ENCODE measurements at regions of chr7 and their contacts with region 1.

Region 1: DNA sequence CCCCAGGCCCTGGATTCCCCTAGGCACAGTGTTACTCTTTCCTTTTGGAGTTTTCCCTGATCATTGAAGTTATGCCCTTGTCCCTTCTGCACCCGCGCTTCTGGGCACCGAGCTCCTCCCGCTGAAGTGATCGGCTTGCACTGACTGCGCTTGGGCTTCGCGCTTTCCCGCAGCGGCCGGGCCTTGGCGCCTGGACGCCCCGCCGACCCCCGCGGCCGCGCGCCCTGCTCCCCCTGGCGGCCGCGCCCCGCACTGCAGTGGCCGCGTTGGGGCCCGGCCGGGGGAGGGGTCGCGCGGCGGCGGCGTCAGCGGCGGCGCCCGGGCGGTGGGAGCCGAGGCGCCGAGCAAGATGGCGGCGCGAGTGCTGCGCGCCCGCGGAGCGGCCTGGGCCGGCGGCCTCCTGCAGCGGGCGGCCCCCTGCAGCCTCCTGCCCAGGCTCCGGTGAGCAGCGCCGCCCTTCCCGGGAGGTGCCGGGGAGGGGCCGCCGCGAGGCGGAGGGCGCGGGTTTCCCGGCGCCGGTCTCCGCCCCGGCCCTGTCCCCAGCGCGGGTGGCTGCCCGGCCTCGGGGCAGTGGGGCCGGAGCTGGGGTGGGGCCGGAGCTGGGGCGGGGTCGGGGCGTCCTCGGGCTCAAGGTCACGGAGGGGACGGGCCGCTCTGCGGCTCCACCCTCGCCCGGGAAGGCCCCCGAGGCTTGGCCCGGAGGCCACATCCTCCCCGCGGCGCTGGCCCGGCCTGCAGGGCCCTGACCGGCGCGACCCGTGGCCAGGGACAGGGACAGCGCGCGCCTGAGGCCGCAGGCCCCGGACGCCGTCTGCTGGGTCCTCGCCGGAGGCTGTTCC is at the start of gene NIPSNAP2:
- DNase-seq: peak; percentile 72 to 84
- ATAC-seq: peak; percentile 89 to 93 (median 91)
- H3K4me3 ChIP-seq: peak within 1 kb of the TSS; percentile 57
- H3K4me3 Mint-ChIP-seq: peak within 1 kb of the TSS; percentile 86
- H3K27ac ChIP-seq: peak within 1 kb of the TSS; percentile 80
- H3K27ac Mint-ChIP-seq: peak within 1 kb of the TSS; percentile 82 to 84
- H3K4me1 ChIP-seq: peaks cover 11% of the 10 kb centered on the region
- H3K4me1 Mint-ChIP-seq: peaks cover 9 to 19% of the 10 kb centered on the region in 2 donors
- H3K27me3 ChIP-seq: no peaks in the 10 kb centered on the region
- H3K27me3 Mint-ChIP-seq: no peaks in the 10 kb centered on the region
- CTCF ChIP-seq: peak; percentile 52
- total RNA-seq, gene NIPSNAP2: 35.9 to 44.8 (median 42.8) TPM

Region 2: DNA sequence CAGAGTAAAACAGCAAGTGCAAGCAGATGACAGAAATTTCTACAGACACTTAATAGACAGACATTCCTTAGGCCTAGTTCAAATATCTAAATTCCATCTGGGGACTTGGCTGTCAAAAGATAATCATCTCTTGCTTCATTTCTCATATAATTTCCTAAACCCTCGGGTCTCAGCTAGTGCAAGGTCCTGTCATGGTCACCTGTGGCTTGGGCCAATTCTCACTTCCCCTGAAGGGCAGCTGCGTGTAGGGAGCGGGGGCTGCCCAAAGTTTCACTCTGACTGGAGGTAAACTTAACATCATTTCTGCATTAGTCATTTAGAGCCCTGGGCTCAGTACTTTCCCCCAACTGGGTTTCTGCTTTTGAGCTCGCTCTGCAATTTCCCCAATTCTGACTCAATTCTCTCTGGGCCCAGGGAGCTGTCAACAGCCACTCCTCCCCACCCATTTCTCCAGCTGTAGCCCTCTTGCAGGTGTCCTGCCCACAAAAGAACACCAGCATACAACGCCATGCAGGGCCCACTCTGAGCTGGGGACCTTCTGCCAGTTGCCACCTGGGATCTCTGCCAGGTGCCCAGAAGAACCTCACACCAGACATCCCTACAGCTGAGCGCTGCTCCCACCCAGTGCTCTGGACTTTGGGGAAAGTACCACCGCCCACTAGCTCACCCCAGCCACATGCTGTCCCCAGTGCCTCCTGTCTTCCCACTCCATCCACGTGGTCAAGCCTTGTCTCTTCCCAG is 430.1 kb before region 1 on chr7:
- intact Hi-C with region 1: loop called (anchors 10 kb)
- DNase-seq: peak; percentile 49 to 71
- ATAC-seq: peak; percentile 46 to 74 (median 67)
- H3K4me3 ChIP-seq: no peak overlapping the region
- H3K4me3 Mint-ChIP-seq: peak overlapping the region; percentile 80
- H3K27ac ChIP-seq: peak overlapping the region; percentile 89
- H3K27ac Mint-ChIP-seq: peak overlapping the region; percentile 89 to 90
- H3K4me1 ChIP-seq: peaks cover 65% of the 10 kb centered on the region
- H3K4me1 Mint-ChIP-seq: peaks cover 88 to 91% of the 10 kb centered on the region in 2 donors
- H3K27me3 ChIP-seq: no peaks in the 10 kb centered on the region
- H3K27me3 Mint-ChIP-seq: no peaks in the 10 kb centered on the region
- CTCF ChIP-seq: no peak

Region 3: DNA sequence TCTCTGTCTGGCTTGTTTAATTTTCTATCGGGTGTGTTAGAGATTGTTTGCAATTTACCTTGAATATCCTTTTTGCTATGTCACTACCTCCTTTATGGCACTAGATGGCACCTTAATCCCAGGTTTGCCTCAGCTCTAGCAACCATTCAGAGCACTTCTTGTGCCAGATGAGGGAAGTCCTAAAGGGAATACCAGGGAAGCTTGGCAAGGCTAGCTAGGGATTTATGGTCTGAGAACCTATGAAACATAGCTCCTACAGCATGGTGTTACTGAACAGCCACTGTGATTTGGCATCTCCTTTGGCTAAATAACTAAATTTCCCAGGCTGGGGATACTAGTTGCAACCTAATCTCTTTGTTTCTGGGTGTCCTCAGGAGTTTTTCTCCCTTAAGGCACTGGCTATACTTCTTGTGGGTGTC is 323.2 kb before region 1 on chr7:
- intact Hi-C with region 1: loop called (anchors 1 kb)
- DNase-seq: peak in 1 of 2 donors; percentile 83
- ATAC-seq: peak; percentile 79 to 94 (median 91)
- H3K4me3 ChIP-seq: no peak overlapping the region
- H3K4me3 Mint-ChIP-seq: peak overlapping the region; percentile 58
- H3K27ac ChIP-seq: no peak overlapping the region
- H3K27ac Mint-ChIP-seq: peak overlapping the region; percentile 44 to 83
- H3K4me1 ChIP-seq: peaks cover 4% of the 10 kb centered on the region
- H3K4me1 Mint-ChIP-seq: peaks cover 11 to 12% of the 10 kb centered on the region in 2 donors
- H3K27me3 ChIP-seq: peaks cover 2% of the 10 kb centered on the region
- H3K27me3 Mint-ChIP-seq: peaks cover 6 to 33% of the 10 kb centered on the region in 2 donors
- CTCF ChIP-seq: peak; percentile 79